ENCODE measurements at regions of chr11 and their contacts with region 1.

Region 1: GRCh38 chr11:76444384-76445123 is at the start of gene EMSY:
- DNase-seq: peak; percentile 94 to 97
- H3K4me3 ChIP-seq: peak within 1 kb of the TSS; percentile 96 to 100 (median 99)
- H3K27ac ChIP-seq: peak within 1 kb of the TSS; percentile 94 to 97
- H3K4me1 ChIP-seq: peaks cover 3 to 5% of the 10 kb centered on the region in 2 donors
- H3K27me3 ChIP-seq: no peaks in the 10 kb centered on the region
- CTCF ChIP-seq: peak in 1 of 3 donors; percentile 4
- POLR2A ChIP-seq: peak; percentile 99
- total RNA-seq, gene EMSY: 22.9 to 71.3 (median 43.9) TPM

Region 2: GRCh38 chr11:76380967-76381719 is 63.4 kb before region 1 on chr11 and contains the starts of genes GVQW3 and THAP12:
- intact Hi-C with region 1: loop called (anchors 2 kb)
- DNase-seq: peak; percentile 96 to 97
- H3K4me3 ChIP-seq: peak within 1 kb of the TSS; percentile 92 to 99 (median 98)
- H3K27ac ChIP-seq: peak within 1 kb of the TSS; percentile 82 to 86
- H3K4me1 ChIP-seq: peaks cover 0 to 3% of the 10 kb centered on the region in 2 donors
- H3K27me3 ChIP-seq: no peaks in the 10 kb centered on the region
- CTCF ChIP-seq: no peak
- POLR2A ChIP-seq: peak; percentile 3
- total RNA-seq, gene GVQW3: 1.3 to 5.4 (median 3.9) TPM
- total RNA-seq, gene THAP12: 42.3 to 49.9 (median 49.5) TPM

Measured in breast epithelium (tissue), 4 donors.